ENCODE measurements at regions of chr17 and their contacts with region 1.

Region 1: GRCh38 chr17:71703701-71704100 is 417.1 kb upstream of the SOX9 start:
- DNase-seq: no peak
- H3K27ac ChIP-seq: no peak overlapping the region
- CTCF ChIP-seq: no peak

Region 2: GRCh38 chr17:70767102-70767701 is 936.5 kb before region 1 on chr17:
- CTCF ChIA-PET with region 1: interaction called, 10 read pairs
- POLR2A ChIA-PET with region 1: no interaction called
- DNase-seq: peak; percentile 26
- H3K27ac ChIP-seq: no peak overlapping the region
- CTCF ChIP-seq: peak; percentile 76

Measured in RWPE1 (cell line).